WTC11 (cell line): ENCODE measurements at regions of chr17 and their contacts with region 1.

Region 1: GRCh38 chr17:45948881-45949624 is 50.0 kb upstream of the STH start:
- DNase-seq: peak; percentile 83
- ATAC-seq: peak; percentile 95
- H3K4me3 Mint-ChIP-seq: peak overlapping the region; percentile 38
- H3K27ac Mint-ChIP-seq: no peak overlapping the region
- H3K4me1 Mint-ChIP-seq: peaks cover 15% of the 10 kb centered on the region
- H3K27me3 Mint-ChIP-seq: peaks cover 20% of the 10 kb centered on the region
- CTCF ChIP-seq: no peak

Region 2: DNA sequence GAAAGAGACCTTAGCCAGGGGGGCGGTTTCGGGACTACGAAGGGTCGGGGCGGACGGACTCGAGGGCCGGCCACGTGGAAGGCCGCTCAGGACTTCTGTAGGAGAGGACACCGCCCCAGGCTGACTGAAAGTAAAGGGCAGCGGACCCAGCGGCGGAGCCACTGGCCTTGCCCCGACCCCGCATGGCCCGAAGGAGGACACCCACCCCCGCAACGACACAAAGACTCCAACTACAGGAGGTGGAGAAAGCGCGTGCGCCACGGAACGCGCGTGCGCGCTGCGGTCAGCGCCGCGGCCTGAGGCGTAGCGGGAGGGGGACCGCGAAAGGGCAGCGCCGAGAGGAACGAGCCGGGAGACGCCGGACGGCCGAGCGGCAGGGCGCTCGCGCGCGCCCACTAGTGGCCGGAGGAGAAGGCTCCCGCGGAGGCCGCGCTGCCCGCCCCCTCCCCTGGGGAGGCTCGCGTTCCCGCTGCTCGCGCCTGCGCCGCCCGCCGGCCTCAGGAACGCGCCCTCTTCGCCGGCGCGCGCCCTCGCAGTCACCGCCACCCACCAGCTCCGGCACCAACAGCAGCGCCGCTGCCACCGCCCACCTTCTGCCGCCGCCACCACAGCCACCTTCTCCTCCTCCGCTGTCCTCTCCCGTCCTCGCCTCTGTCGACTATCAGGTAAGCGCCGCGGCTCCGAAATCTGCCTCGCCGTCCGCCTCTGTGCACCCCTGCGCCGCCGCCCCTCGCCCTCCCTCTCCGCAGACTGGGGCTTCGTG is 54.9 kb before region 1 on chr17 and contains the start of gene MAPT:
- CTCF ChIA-PET with region 1: interaction called, 17 read pairs
- POLR2A ChIA-PET with region 1: no interaction called
- DNase-seq: peak; percentile 89
- ATAC-seq: peak; percentile 64
- H3K4me3 Mint-ChIP-seq: peak within 1 kb of the TSS; percentile 73
- H3K27ac Mint-ChIP-seq: no peak within 1 kb of the TSS
- H3K4me1 Mint-ChIP-seq: peaks cover 18% of the 10 kb centered on the region
- H3K27me3 Mint-ChIP-seq: peaks cover 86% of the 10 kb centered on the region
- CTCF ChIP-seq: peak; percentile 83
- total RNA-seq, gene MAPT: 2.2 to 4.2 TPM (median 2.9 TPM) in 3 replicates

Region 3: DNA sequence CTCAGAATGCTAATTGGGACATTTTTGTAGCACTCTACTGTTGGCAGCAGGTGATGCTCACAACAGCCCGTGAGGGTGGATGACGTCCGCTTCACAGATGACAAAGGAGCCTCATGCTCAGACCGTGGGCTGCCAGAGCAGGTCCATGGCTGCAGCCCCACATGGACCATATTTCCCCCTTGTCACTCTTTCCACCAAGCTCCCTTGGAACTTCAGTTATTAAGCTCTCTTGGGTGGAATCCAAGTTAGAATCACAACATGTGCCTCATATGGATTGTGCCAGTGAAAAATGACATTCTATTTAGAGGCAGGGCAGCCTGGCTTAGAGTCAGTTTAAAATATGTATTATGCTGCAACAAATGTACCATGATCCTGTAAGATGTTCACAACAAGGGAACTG is 16.8 kb after region 1 on chr17:
- CTCF ChIA-PET with region 1: interaction called, 16 read pairs
- POLR2A ChIA-PET with region 1: no interaction called
- DNase-seq: no peak
- ATAC-seq: no peak
- H3K4me3 Mint-ChIP-seq: no peak overlapping the region
- H3K27ac Mint-ChIP-seq: no peak overlapping the region; the same call in 1 of the 2 replicates
- H3K4me1 Mint-ChIP-seq: no peaks in the 10 kb centered on the region
- H3K27me3 Mint-ChIP-seq: no peaks in the 10 kb centered on the region; the same call in 1 of the 2 replicates
- CTCF ChIP-seq: no peak

Region 4: DNA sequence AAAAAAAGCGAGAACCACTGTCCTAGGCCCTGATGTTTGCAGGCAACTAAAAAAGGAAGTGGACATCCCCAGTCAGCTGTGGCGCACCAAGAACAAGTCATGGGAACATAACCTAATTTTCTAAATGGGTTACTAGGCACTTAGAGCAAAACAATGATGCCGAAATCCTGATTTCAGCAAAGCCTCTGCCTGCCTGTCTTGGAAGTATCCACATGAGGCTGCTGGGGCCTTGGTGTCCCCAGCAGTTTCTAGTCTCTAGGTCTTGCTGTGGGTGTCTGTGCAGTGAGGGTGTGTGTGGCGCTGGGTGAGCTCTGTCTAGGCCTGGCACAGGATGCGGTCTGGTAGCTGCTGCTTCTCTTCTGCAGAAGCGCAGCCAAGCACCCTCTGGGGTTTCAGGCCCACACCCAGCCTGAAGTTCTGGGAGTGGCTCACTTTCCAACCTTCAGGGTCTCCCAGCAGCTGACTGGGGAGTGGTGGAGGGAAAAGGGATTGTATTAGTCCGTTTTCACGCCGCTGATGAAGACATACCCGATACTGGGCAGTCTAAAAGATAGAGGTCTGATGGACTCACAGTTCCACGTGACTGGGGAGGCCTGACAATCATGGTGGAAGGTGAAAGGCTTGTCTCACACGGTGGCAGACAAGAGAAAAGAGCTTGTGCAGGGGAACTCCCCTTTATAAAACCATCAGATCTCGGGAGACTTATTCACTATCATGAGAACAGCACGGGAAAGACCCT is 71.1 kb after region 1 on chr17:
- CTCF ChIA-PET with region 1: no interaction called
- POLR2A ChIA-PET with region 1: no interaction called
- DNase-seq: no peak
- ATAC-seq: no peak
- H3K4me3 Mint-ChIP-seq: no peak overlapping the region
- H3K27ac Mint-ChIP-seq: no peak overlapping the region; the same call in 1 of the 2 replicates
- H3K4me1 Mint-ChIP-seq: no peaks in the 10 kb centered on the region
- H3K27me3 Mint-ChIP-seq: no peaks in the 10 kb centered on the region
- CTCF ChIP-seq: no peak